Activated T-helper 1 cell treated with anti-CD3 and anti-CD28 coated beads, Interleukin-12 subunit alpha, Interleukin-12 subunit beta, Interleukin-2, Interleukin-4 antibody, amounts not matched to agents 30 ng/mL and 10 ng/mL and 1 ng/mL, durations not matched to agents 14 hours and 24 hours and 36 hours (primary cell): ENCODE measurements at regions of chr16 and their contacts with region 1.

Region 1: DNA sequence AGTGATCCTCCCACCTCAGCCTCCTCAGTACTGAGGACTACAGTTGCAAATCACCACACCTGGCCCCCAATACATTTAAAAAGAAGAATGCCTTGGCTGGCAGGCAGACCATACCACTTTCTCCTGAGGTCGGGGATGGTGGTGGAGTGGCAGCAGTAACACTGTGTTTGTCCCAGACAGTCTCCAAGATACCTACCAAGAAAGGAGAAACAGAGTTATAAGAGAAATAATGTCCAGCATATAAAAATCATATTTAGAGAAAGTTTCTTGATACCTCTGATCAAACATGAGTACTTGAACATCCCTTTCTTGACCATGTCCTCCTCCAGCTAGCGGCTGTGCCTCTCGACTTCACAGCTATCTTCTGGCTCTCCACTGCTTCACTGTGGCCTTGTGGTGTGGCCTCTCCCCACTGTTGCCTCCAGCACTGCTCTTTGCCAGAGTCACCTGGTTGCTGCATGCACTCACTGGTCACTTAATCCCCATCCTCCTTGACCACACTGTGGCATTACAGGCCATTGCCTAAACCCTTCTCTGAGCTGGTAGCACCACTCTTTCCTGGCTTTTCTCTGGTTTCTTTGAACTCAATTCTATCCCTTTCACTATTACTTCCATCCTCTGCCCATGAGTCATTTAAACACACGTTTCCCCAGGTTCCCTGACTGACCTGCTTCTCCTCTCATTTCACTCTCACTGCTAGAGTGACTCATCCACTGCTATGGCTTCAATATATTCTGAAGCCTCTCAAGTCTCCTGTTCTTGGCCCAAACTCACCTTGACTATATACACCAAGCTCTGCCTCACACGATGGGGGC is 45.2 kb downstream of the XPO6 start:
- DNase-seq: no peak
- H3K4me3 Mint-ChIP-seq: peak overlapping the region; percentile 1
- H3K27ac Mint-ChIP-seq: peak overlapping the region; percentile 32
- H3K4me1 Mint-ChIP-seq: peaks cover 68% of the 10 kb centered on the region
- H3K27me3 Mint-ChIP-seq: no peaks in the 10 kb centered on the region

Region 2: GRCh38 chr16:27932542-27933135 is 234.0 kb before region 1 on chr16:
- intact Hi-C with region 1: no loop called
- DNase-seq: no peak
- H3K4me3 Mint-ChIP-seq: no peak overlapping the region
- H3K27ac Mint-ChIP-seq: no peak overlapping the region
- H3K4me1 Mint-ChIP-seq: no peaks in the 10 kb centered on the region
- H3K27me3 Mint-ChIP-seq: no peaks in the 10 kb centered on the region

Region 3: GRCh38 chr16:27977966-27978365 is 188.6 kb before region 1 on chr16:
- intact Hi-C with region 1: no loop called
- DNase-seq: no peak
- H3K4me3 Mint-ChIP-seq: no peak overlapping the region
- H3K27ac Mint-ChIP-seq: no peak overlapping the region
- H3K4me1 Mint-ChIP-seq: no peaks in the 10 kb centered on the region
- H3K27me3 Mint-ChIP-seq: peaks cover 4% of the 10 kb centered on the region

Region 4: GRCh38 chr16:28182183-28182582 is 15.6 kb after region 1 on chr16:
- intact Hi-C with region 1: loop called (anchors 1 kb)
- DNase-seq: no peak
- H3K4me3 Mint-ChIP-seq: peak overlapping the region; percentile 75
- H3K27ac Mint-ChIP-seq: peak overlapping the region; percentile 93
- H3K4me1 Mint-ChIP-seq: peaks cover 80% of the 10 kb centered on the region
- H3K27me3 Mint-ChIP-seq: no peaks in the 10 kb centered on the region

Region 5: GRCh38 chr16:28187595-28188004 is 21.0 kb after region 1 on chr16:
- intact Hi-C with region 1: loop called (anchors 1 kb)
- DNase-seq: no peak
- H3K4me3 Mint-ChIP-seq: peak overlapping the region; percentile 54
- H3K27ac Mint-ChIP-seq: peak overlapping the region; percentile 88
- H3K4me1 Mint-ChIP-seq: peaks cover 93% of the 10 kb centered on the region
- H3K27me3 Mint-ChIP-seq: no peaks in the 10 kb centered on the region

Region 6: GRCh38 chr16:28193530-28194423 is 27.2 kb after region 1 on chr16:
- intact Hi-C with region 1: loop called (anchors 1 kb)
- DNase-seq: peak; percentile 35
- H3K4me3 Mint-ChIP-seq: peak overlapping the region; percentile 77
- H3K27ac Mint-ChIP-seq: peak overlapping the region; percentile 86
- H3K4me1 Mint-ChIP-seq: peaks cover 78% of the 10 kb centered on the region
- H3K27me3 Mint-ChIP-seq: no peaks in the 10 kb centered on the region